Adrenal gland (tissue), 19 donors: ENCODE measurements at regions of chr14 and their contacts with region 1.

Region 1: DNA sequence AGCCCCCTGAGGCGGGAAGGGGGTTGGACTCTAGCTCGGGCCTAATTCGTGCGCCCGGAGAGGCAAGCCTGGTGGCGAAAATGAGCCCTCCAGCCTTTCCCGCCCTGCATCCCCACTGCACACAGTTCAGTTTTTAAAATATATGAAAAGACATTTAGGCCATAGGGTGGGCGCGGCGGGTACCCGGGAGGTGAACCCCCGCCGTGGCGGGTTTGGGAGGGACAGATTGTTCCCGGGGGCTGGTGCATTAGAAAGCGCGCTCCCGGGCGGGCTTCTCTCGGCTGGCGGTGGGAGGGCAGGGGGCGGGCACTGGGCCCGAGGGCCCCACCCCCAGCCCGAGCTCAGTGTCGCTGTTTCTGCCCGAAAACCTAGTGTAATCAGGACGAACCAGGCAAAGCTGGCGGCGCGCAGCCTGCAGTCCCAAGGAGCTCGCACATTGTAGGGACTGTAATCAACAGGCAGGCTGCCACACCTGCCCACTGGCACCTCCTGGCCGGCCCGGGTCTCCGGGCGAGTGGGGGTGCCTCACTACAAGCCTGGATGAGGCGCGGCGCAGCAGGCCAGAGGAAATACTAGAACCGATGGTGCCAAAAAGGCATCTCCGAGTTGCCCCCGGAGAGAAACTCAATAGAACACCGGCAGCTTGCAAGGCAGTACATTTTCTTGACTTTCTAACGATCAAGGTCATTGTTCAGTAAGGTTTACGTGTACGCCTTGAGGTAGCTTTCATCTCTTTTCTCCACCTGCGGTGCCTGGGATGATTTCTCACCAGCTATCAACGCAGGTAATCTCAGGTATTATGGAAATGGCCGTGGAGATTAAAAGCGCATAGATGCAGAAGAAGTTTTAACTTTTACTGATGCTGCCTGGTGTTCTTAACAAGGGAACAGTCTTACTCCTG is 764 bp upstream of the SPTB start:
- DNase-seq: peak; percentile 7 to 70 (median 22)
- H3K4me3 ChIP-seq: peak overlapping the region in 2 of 4 donors; percentile 22 to 54
- H3K27ac ChIP-seq: peak overlapping the region in 1 of 5 donors; percentile 37
- H3K4me1 ChIP-seq: peaks cover 15 to 17% of the 10 kb centered on the region in 2 donors
- H3K27me3 ChIP-seq: peaks cover 18% of the 10 kb centered on the region
- CTCF ChIP-seq: no peak
- POLR2A ChIP-seq: no peak

Region 2: DNA sequence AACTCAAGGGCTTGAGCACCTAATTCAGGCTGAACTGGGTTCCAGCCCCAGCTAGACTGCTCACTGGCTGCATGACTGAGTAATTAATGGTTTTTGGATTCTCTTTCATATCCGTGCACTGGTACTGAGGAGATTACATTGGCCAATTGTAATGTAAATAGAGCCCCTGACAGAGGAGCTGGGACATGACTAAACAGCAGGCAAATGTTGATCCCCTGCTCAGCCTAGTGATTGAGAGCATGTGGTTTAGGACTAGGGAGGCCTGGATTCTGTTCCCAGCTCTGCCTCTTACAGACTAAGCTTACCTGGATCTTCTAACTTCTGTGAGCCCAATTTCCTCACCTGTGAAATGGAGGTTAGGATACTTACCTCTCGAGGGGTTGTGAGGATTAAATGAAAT is 790.6 kb before region 1 on chr14:
- intact Hi-C with region 1: no loop called
- DNase-seq: no peak
- H3K4me3 ChIP-seq: no peak overlapping the region
- H3K27ac ChIP-seq: no peak overlapping the region
- H3K4me1 ChIP-seq: no peaks in the 10 kb centered on the region
- H3K27me3 ChIP-seq: no peaks in the 10 kb centered on the region
- CTCF ChIP-seq: no peak
- POLR2A ChIP-seq: no peak

Region 3: DNA sequence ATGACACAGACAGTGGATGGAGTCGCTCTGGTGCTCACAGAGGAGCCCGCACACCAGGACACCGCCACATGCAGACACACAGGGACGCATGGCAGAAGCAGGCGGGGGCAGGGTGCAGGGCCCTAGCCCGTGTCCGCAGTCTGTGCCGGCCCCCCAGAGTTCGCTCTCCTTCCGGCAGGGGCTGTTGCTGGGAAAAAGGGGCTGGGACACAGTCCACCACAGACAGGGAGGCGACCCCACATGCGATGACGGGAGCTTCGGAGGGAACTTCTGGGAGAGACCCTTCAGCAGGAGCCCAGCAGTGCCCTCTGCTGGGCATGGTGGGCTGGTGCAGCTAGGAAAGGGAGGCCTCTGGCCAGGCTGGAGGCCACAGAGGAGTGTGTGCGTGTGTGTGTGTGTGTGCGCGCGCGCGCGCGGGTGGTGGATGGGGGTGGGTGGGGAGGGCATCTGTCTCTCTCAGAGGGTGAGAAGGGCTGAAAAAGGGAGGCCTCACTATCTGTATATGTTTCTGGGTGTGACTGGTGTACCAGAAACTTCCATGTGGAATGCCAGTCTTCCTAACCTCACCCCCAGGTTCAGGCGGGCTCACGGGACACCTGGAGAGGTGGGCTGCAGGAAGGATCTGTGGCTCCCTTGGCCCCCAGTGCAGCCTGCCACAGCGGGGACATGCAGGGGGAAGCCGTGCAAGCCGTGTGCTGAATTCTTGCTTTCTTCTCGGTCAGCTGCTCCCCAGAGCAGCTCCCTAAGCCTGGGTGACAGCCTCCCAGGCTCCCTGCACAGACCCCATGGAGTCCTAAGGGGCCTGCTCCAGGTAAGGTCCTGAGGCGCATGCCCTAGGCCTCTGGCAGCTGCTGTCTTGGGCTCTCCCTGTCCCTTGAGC is 115.6 kb before region 1 on chr14:
- intact Hi-C with region 1: loop called in 1 of 2 experiments (anchors 10 kb)
- DNase-seq: peak; percentile 62 to 86 (median 72)
- H3K4me3 ChIP-seq: peak overlapping the region in 1 of 4 donors; percentile 42
- H3K27ac ChIP-seq: peak overlapping the region in 2 of 5 donors; percentile 75 to 81
- H3K4me1 ChIP-seq: peaks cover 10 to 37% of the 10 kb centered on the region in 2 donors
- H3K27me3 ChIP-seq: no peaks in the 10 kb centered on the region
- CTCF ChIP-seq: peak; percentile 85 to 95 (median 88)
- POLR2A ChIP-seq: no peak

Region 4: GRCh38 chr14:64928239-64929013 is 48.0 kb after region 1 on chr14:
- intact Hi-C with region 1: no loop called
- DNase-seq: no peak
- H3K4me3 ChIP-seq: no peak overlapping the region
- H3K27ac ChIP-seq: no peak overlapping the region
- H3K4me1 ChIP-seq: peaks cover 0 to 24% of the 10 kb centered on the region in 2 donors
- H3K27me3 ChIP-seq: no peaks in the 10 kb centered on the region
- CTCF ChIP-seq: no peak
- POLR2A ChIP-seq: no peak

Region 5: DNA sequence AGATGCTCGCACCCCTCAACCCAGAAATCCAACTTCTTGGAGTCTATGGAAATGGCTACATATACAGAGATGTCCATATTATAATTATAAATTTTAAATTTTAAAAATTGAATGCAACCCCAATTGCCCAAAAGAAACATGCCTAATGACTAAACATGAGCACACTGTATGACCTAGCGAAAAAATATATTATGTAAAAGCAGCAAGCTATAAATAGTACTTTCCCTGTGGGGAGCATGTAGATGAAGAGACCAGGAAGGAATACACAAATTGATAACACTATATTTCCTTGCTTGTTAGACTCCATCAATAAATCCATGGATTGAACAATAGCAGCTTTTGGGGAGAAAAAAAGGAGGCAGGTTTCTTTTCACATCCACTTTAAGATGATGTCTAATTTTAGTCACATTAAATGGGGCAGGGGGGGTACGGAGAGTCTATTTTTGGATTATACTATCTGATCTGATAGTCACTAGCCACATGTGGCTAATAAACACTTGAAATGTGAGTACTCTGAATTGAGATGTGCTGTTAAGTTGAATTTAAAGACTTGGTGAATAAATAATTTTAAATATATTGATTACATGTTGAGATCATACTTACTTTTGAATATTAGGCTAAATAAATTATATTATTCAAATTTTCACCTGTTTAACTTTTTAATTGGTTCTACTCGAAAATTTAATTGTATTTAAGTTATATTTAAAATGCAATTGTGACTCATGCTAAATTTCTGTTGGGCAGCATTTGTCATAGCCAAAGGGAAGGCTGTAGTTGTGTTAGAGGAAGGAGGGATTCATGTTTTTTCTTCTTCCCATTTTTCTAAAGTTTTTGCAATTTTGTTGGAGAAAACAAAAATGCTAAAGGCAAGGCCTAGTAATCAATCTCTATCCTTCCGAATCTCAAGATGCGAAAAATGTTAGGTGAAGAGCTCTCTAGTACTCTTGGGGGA is 204.4 kb after region 1 on chr14:
- intact Hi-C with region 1: no loop called
- DNase-seq: no peak
- H3K4me3 ChIP-seq: no peak overlapping the region
- H3K27ac ChIP-seq: no peak overlapping the region
- H3K4me1 ChIP-seq: peaks cover 10 to 38% of the 10 kb centered on the region in 2 donors
- H3K27me3 ChIP-seq: no peaks in the 10 kb centered on the region
- CTCF ChIP-seq: no peak
- POLR2A ChIP-seq: no peak